ENCODE measurements at regions of chr3 and their contacts with region 1.

Region 1: GRCh38 chr3:179732661-179733348 is 80.0 kb downstream of the USP13 start:
- DNase-seq: peak; percentile 84 to 94
- ATAC-seq: peak; percentile 56 to 64
- H3K4me3 ChIP-seq: no peak overlapping the region
- H3K27ac ChIP-seq: peak overlapping the region; percentile 88 to 96 (median 94)
- H3K4me1 ChIP-seq: peaks cover 61% of the 10 kb centered on the region in 2 donors
- H3K27me3 ChIP-seq: no peaks in the 10 kb centered on the region
- CTCF ChIP-seq: no peak
- POLR2A ChIP-seq: no peak

Region 2: DNA sequence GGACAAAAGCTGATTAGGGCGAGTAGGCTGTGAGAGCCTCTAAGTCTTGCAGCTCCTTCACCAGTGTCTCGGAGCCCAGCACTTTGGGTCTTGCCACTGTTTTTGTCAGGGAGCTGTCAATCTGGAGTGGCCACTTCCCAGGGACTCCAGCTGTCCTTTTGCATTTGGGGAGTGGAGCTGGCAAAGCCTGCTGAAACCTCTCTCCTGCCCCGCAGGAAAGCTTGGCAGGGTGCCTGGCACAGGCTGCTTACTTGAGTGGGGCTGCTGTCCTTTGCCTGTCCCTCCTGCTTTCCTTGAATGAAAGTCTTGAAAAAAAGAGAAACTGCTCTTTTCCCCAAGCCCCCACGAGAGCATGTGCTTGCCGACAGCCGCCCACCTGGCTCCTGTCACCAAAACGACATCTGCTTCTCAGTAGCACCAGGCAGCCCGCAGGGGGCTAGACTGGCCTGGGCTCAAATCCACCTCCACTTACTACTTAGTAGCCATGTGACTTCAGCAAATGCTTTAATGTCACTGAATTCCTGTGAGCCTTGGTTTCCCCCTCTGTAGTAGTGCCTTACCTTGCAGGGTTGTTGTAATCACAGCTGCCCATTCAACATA is 66.3 kb before region 1 on chr3:
- in situ Hi-C with region 1: loop called in 1 of 4 experiments (anchors 5 kb)
- intact Hi-C with region 1: loop called (anchors 5 kb)
- DNase-seq: peak; percentile 86 to 91
- ATAC-seq: peak; percentile 81 to 88
- H3K4me3 ChIP-seq: peak overlapping the region; percentile 18 to 32 (median 24)
- H3K27ac ChIP-seq: peak overlapping the region; percentile 86 to 98 (median 94)
- H3K4me1 ChIP-seq: peaks cover 94 to 97% of the 10 kb centered on the region in 2 donors
- H3K27me3 ChIP-seq: no peaks in the 10 kb centered on the region
- CTCF ChIP-seq: no peak
- POLR2A ChIP-seq: peak in 1 of 2 donors; percentile 35

Region 3: GRCh38 chr3:179671747-179672223 is 61.0 kb before region 1 on chr3:
- in situ Hi-C with region 1: loop called in 1 of 4 experiments (anchors 5 kb)
- intact Hi-C with region 1: loop called (anchors 5 kb)
- DNase-seq: peak; percentile 76
- ATAC-seq: peak; percentile 83 to 84
- H3K4me3 ChIP-seq: peak overlapping the region in 3 of 4 donors; percentile 6 to 27 (median 16)
- H3K27ac ChIP-seq: peak overlapping the region; percentile 80 to 98 (median 94)
- H3K4me1 ChIP-seq: peaks cover 62 to 71% of the 10 kb centered on the region in 2 donors
- H3K27me3 ChIP-seq: no peaks in the 10 kb centered on the region
- CTCF ChIP-seq: no peak
- POLR2A ChIP-seq: peak in 1 of 2 donors; percentile 59

Region 4: GRCh38 chr3:179706233-179706632 is 26.6 kb before region 1 on chr3:
- in situ Hi-C with region 1: no loop called
- intact Hi-C with region 1: loop called (anchors 2 kb)
- DNase-seq: peak; percentile 84 to 87
- ATAC-seq: peak; percentile 91 to 93
- H3K4me3 ChIP-seq: no peak overlapping the region
- H3K27ac ChIP-seq: peak overlapping the region; percentile 85 to 90 (median 86)
- H3K4me1 ChIP-seq: peaks cover 65 to 77% of the 10 kb centered on the region in 2 donors
- H3K27me3 ChIP-seq: no peaks in the 10 kb centered on the region
- CTCF ChIP-seq: peak in 1 of 5 experiments; percentile 17
- POLR2A ChIP-seq: no peak

Measured in gastrocnemius medialis (tissue), 4 donors.